Panc1 (cell line): ENCODE measurements at regions of chr6 and their contacts with region 1.

Region 1: GRCh38 chr6:83615025-83615999 is 93.6 kb downstream of the SNAP91 start:
- DNase-seq: peak; percentile 12
- ATAC-seq: peak; percentile 74
- H3K4me3 ChIP-seq: no peak overlapping the region
- H3K27ac ChIP-seq: no peak overlapping the region
- H3K4me1 ChIP-seq: no peaks in the 10 kb centered on the region
- H3K27me3 ChIP-seq: no peaks in the 10 kb centered on the region; the same call in 1 of the 2 replicates
- CTCF ChIP-seq: peak; percentile 78

Region 2: DNA sequence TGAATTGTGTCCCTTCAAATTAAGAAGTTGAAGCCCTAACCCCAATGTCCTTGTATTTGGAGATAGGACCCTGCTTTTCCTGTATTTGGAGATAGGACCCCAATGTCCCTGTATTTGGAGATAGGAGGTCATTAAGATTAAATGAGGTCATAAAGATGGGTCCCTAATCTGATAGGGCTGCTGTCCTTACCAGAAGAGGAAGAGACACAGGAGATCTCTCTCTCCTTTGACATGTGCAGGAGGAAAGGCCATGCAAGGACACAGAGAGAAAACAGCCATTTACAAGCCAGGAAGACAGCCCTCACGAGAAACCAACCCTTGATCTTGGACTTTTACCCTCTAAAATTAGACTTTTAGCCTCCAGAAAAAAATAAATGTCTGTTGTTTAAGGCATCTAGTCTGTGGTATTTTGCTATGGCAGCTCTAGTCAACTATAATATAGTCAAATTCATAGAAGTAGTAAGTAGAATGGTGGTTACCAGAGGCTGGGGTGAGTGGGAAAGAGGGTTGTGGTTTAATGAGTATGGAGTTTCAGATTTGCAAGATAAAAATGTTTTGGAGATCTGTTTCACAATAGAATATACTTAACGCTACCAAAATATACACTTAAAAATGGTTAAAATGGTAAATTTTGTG is 608.9 kb before region 1 on chr6:
- CTCF ChIA-PET with region 1: no interaction called
- POLR2A ChIA-PET with region 1: interaction called, 10 read pairs
- in situ Hi-C with region 1: no loop called
- intact Hi-C with region 1: no loop called
- DNase-seq: no peak
- ATAC-seq: no peak
- H3K4me3 ChIP-seq: no peak overlapping the region
- H3K27ac ChIP-seq: no peak overlapping the region
- H3K4me1 ChIP-seq: no peaks in the 10 kb centered on the region
- H3K27me3 ChIP-seq: no peaks in the 10 kb centered on the region
- CTCF ChIP-seq: no peak

Region 3: GRCh38 chr6:83853178-83854000 is 238.1 kb after region 1 on chr6 and contains the start of gene RIPPLY2:
- CTCF ChIA-PET with region 1: interaction called, 6 read pairs
- POLR2A ChIA-PET with region 1: no interaction called
- in situ Hi-C with region 1: no loop called
- intact Hi-C with region 1: loop called (anchors 2 kb)
- DNase-seq: no peak
- ATAC-seq: peak; percentile 98
- H3K4me3 ChIP-seq: peak within 1 kb of the TSS; percentile 72 to 76
- H3K27ac ChIP-seq: peak within 1 kb of the TSS; percentile 79
- H3K4me1 ChIP-seq: peaks cover 6% of the 10 kb centered on the region; the same call in 1 of the 2 replicates
- H3K27me3 ChIP-seq: peaks cover 2% of the 10 kb centered on the region; the same call in 1 of the 2 replicates
- CTCF ChIP-seq: no peak
- total RNA-seq, gene RIPPLY2: 6.5 TPM

Region 4: GRCh38 chr6:84227434-84228197 is 612.3 kb after region 1 on chr6 and contains the start of gene CEP162:
- CTCF ChIA-PET with region 1: no interaction called
- POLR2A ChIA-PET with region 1: no interaction called
- in situ Hi-C with region 1: no loop called
- intact Hi-C with region 1: loop called (anchors 10 kb)
- DNase-seq: peak; percentile 87
- ATAC-seq: peak; percentile 100
- H3K4me3 ChIP-seq: peak within 1 kb of the TSS; percentile 90 to 100
- H3K27ac ChIP-seq: peak within 1 kb of the TSS; percentile 93
- H3K4me1 ChIP-seq: peaks cover 6% of the 10 kb centered on the region
- H3K27me3 ChIP-seq: peaks cover 11% of the 10 kb centered on the region
- CTCF ChIP-seq: peak; percentile 80
- total RNA-seq, gene CEP162: 5.3 TPM